Panc1 (cell line): ENCODE measurements at regions of chr6 and their contacts with region 1.

Region 1: GRCh38 chr6:30882759-30883684 is 1.3 kb upstream of the DDR1 start:
- DNase-seq: no peak
- ATAC-seq: peak; percentile 18; the same call in 1 of the 2 replicates
- H3K4me3 ChIP-seq: peak overlapping the region; percentile 50 to 62
- H3K27ac ChIP-seq: peak overlapping the region; percentile 84
- H3K4me1 ChIP-seq: peaks cover 47% of the 10 kb centered on the region
- H3K27me3 ChIP-seq: no peaks in the 10 kb centered on the region
- CTCF ChIP-seq: no peak

Region 2: DNA sequence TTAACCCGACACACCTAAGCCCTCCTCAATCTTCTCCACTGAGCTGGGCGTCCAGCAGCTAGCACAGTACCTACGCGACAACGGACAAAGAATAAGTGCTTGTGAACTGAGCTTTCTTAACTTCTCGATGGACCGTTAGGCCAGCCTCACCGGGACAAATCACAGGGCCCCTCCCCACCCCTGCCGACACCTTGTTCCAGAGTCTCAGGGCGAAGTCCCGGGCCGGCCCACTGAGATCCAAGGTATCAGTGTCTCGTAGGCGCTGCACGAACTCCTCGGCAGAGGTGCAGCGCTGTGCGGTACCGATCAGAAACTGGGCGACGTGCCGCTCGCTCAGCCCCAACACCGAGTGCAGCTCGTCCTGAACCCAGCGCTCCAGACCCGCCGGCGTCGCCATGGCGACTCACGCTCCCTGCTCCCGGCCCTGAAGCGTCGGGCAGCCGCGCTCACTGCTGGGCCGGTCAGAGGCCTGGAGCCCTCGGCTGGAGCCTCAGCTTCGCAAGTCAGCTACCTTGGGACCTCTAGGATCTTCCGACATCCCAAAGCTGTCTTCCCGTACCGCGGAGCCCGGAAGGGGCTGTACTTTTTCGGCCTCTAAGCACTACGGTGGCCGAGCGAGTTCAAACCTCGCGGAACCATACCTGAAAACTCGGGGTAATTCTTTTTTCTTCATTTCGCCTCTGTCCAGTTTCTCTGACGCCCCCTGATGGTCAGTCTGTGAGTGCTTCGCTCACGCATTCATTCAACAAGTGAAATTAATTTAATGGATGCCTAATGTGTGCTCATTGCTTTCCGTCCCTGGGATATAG is 210.4 kb before region 1 on chr6 and contains the start of gene DHX16:
- CTCF ChIA-PET with region 1: no interaction called
- POLR2A ChIA-PET with region 1: interaction called, 19 read pairs
- in situ Hi-C with region 1: no loop called
- intact Hi-C with region 1: loop called (anchors 5 kb)
- DNase-seq: peak; percentile 96
- ATAC-seq: peak; percentile 91
- H3K4me3 ChIP-seq: peak within 1 kb of the TSS; percentile 85 to 99
- H3K27ac ChIP-seq: peak within 1 kb of the TSS; percentile 80
- H3K4me1 ChIP-seq: no peaks in the 10 kb centered on the region
- H3K27me3 ChIP-seq: no peaks in the 10 kb centered on the region
- CTCF ChIP-seq: peak; percentile 94
- total RNA-seq, gene DHX16: 44.5 TPM

Region 3: GRCh38 chr6:30834643-30835042 is 48.4 kb before region 1 on chr6:
- CTCF ChIA-PET with region 1: no interaction called
- POLR2A ChIA-PET with region 1: no interaction called
- in situ Hi-C with region 1: no loop called
- intact Hi-C with region 1: no loop called
- DNase-seq: no peak
- ATAC-seq: no peak
- H3K4me3 ChIP-seq: no peak overlapping the region
- H3K27ac ChIP-seq: no peak overlapping the region
- H3K4me1 ChIP-seq: no peaks in the 10 kb centered on the region
- H3K27me3 ChIP-seq: no peaks in the 10 kb centered on the region
- CTCF ChIP-seq: no peak

Region 4: DNA sequence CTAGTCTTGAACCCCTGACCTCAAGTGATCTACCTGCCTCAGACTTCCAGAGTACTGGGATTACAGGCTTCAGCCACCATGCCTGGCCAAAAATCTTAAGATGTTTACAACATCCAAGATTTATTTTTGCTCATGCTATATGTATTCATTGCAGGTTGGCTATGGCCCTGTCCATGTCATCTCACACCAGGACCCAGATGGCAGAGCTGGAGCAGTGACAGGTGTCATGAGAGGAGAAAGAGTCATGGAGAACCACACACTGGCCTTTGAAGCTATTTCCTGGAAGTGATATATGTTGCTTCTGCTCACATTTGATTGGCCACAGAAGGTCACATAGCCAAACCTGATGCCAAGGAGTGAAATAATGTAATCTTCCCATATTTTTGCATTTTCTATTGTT is 12.5 kb before region 1 on chr6:
- CTCF ChIA-PET with region 1: no interaction called
- POLR2A ChIA-PET with region 1: no interaction called
- in situ Hi-C with region 1: no loop called
- intact Hi-C with region 1: no loop called
- DNase-seq: no peak
- ATAC-seq: no peak
- H3K4me3 ChIP-seq: no peak overlapping the region
- H3K27ac ChIP-seq: no peak overlapping the region
- H3K4me1 ChIP-seq: no peaks in the 10 kb centered on the region
- H3K27me3 ChIP-seq: no peaks in the 10 kb centered on the region
- CTCF ChIP-seq: no peak

Region 5: DNA sequence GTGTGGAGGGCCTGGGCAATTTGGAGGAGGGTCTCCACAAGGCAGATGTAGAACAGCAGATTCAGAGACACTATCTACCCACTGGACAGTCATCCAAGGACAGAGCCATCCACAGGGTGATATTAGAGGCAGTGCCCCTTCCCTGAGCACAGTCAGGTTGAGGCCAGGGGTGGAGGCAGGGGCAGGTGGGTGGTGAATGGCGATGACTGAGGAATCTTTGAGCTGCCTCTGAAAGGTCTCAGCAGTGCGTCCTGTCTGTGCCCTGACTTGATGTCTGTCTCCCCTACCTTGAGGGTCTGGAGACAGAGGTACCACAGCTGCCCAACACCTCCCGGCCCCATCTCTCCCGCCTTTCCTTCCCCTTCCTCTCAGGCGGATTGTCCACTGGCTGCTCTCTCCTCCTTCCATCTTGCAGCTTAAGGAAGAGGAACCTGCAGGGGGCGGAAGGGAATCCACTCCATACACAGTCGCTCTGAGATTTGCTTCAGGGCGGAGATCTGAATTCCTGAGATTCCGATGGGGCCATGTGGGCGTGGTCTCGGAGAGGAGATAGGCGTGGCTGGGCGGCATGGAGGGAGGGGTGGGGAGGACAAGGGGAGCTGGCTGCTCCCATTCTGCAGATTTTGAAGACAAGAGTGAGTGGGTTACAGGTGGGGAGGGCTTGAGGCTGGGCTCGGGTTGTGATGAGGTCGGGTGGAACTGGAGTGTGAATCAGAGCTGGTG is 59.5 kb after region 1 on chr6:
- CTCF ChIA-PET with region 1: no interaction called
- POLR2A ChIA-PET with region 1: no interaction called
- in situ Hi-C with region 1: no loop called
- intact Hi-C with region 1: no loop called
- DNase-seq: peak; percentile 39
- ATAC-seq: peak; percentile 84
- H3K4me3 ChIP-seq: no peak overlapping the region
- H3K27ac ChIP-seq: no peak overlapping the region
- H3K4me1 ChIP-seq: peaks cover 8% of the 10 kb centered on the region; the same call in 1 of the 2 replicates
- H3K27me3 ChIP-seq: peaks cover 10% of the 10 kb centered on the region
- CTCF ChIP-seq: no peak; the same call in 1 of the 2 replicates